Activated CD8-positive, alpha-beta T cell treated with anti-CD3 and anti-CD28 coated beads, Interleukin-2, amount 10 ng/mL, durations not matched to agents 7 days and 5 days (primary cell): ENCODE measurements at regions of chr1 and their contacts with region 1.

Region 1: DNA sequence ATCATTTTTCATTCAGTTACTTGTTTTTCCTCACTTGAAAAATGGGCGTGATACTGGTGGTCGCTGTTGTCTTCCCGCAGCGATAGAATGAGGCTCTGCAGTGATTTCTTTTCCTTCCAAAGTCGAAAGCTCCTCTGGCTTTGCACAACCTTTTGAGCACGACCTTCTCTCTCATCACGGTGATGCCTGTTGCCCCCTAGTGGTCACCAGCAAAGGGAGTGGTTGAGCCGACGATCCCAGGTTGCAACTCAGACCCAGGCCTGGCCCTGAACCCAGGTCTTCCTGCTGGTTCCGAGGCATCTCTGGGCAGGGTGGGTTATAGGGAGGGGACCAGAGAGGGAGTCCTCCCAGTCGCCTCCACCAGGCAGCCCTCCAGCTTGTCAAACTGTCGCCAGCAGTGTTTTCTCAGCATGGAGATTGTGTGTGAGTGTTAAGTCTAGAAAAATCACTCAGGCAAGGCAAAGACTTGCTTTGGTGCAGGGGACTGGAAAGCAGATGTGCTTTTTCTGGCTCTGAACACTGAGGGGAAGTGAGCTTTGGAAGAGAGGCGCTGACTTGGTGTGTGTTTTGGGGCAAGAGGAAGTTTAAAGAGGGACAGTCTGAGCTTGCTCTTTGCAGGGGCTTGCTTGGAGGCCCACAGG is 285.3 kb downstream of the CAMTA1 start:
- DNase-seq: peak; percentile 66
- ATAC-seq: peak; percentile 71
- H3K4me3 Mint-ChIP-seq: no peak overlapping the region
- H3K27ac Mint-ChIP-seq: no peak overlapping the region
- H3K4me1 Mint-ChIP-seq: no peaks in the 10 kb centered on the region
- H3K27me3 Mint-ChIP-seq: peaks cover 7% of the 10 kb centered on the region

Region 2: DNA sequence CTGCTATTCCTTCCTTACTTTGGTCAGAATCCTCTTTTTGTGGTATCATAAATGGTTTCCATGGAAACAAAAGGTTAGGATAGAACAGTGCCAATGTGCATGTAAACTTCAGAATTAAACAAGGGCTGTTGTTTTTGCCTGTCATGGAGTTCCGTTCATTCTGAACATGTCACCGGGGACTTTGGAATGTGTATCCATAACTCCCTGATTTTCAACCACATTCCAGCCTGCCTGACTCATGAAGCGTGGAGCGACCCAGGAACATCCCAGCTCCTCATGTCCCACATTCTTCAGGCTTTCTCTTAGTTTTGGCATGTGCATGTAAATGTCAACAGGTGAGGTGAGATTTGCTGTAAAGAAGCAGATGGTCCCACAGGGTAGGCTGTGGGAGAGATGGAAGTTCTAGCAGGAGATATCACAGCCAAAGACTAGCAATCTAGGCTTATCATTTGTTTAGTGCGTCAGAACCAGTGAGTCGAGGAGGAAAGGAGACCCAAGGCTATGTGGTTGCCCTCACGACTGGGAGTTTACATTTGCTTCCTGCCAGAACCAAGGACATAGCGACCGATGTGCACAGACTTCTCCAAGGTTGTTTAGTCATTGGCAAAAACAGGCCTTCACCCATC is 345.9 kb before region 1 on chr1:
- CTCF ChIA-PET with region 1: interaction called, 20 read pairs
- POLR2A ChIA-PET with region 1: no interaction called
- DNase-seq: no peak
- ATAC-seq: no peak
- H3K4me3 Mint-ChIP-seq: no peak overlapping the region
- H3K27ac Mint-ChIP-seq: no peak overlapping the region
- H3K4me1 Mint-ChIP-seq: no peaks in the 10 kb centered on the region
- H3K27me3 Mint-ChIP-seq: no peaks in the 10 kb centered on the region

Region 3: GRCh38 chr1:7042322-7043190 is 28.0 kb before region 1 on chr1:
- CTCF ChIA-PET with region 1: interaction called, 13 read pairs
- POLR2A ChIA-PET with region 1: no interaction called
- DNase-seq: no peak
- ATAC-seq: no peak
- H3K4me3 Mint-ChIP-seq: no peak overlapping the region
- H3K27ac Mint-ChIP-seq: no peak overlapping the region
- H3K4me1 Mint-ChIP-seq: no peaks in the 10 kb centered on the region
- H3K27me3 Mint-ChIP-seq: no peaks in the 10 kb centered on the region